Activated CD4-positive, alpha-beta T cell treated with anti-CD3 and anti-CD28 coated beads for 36 hours (primary cell): ENCODE measurements at regions of chr14 and their contacts with region 1.

Region 1: GRCh38 chr14:47917345-47917954 is 242.0 kb upstream of the MDGA2 start:
- DNase-seq: peak; percentile 12
- ATAC-seq: no peak
- H3K4me3 Mint-ChIP-seq: no peak overlapping the region
- H3K27ac Mint-ChIP-seq: no peak overlapping the region
- H3K4me1 Mint-ChIP-seq: peaks cover 3% of the 10 kb centered on the region
- H3K27me3 Mint-ChIP-seq: no peaks in the 10 kb centered on the region

Region 2: GRCh38 chr14:47896749-47897148 is 20.7 kb before region 1 on chr14:
- CTCF ChIA-PET with region 1: no interaction called
- POLR2A ChIA-PET with region 1: no interaction called
- intact Hi-C with region 1: no loop called
- DNase-seq: no peak
- ATAC-seq: no peak
- H3K4me3 Mint-ChIP-seq: no peak overlapping the region
- H3K27ac Mint-ChIP-seq: no peak overlapping the region
- H3K4me1 Mint-ChIP-seq: no peaks in the 10 kb centered on the region
- H3K27me3 Mint-ChIP-seq: no peaks in the 10 kb centered on the region

Region 3: GRCh38 chr14:47966076-47966810 is 48.8 kb after region 1 on chr14:
- CTCF ChIA-PET with region 1: no interaction called
- POLR2A ChIA-PET with region 1: no interaction called
- intact Hi-C with region 1: no loop called
- DNase-seq: no peak
- ATAC-seq: no peak
- H3K4me3 Mint-ChIP-seq: no peak overlapping the region
- H3K27ac Mint-ChIP-seq: no peak overlapping the region
- H3K4me1 Mint-ChIP-seq: no peaks in the 10 kb centered on the region
- H3K27me3 Mint-ChIP-seq: no peaks in the 10 kb centered on the region

Region 4: DNA sequence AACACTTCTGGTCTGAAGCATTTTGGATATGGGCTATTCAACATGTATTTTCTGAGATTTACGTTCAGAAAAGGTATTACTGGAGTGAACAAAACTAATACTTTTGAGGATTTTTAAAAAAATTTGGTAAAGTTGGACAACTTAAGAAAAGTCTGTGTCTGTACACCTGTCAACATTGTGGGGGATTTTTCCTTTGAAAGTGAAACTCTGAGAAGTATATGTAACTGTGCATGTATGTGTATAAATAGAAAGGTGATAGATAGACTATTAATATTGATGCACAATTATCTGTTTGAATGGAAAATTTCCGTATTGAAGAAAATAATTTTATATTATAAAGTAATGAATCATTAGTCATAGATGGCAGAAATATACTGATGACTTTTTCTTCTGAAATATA is 70.7 kb after region 1 on chr14:
- CTCF ChIA-PET with region 1: no interaction called
- POLR2A ChIA-PET with region 1: no interaction called
- intact Hi-C with region 1: no loop called
- DNase-seq: no peak
- ATAC-seq: no peak
- H3K4me3 Mint-ChIP-seq: no peak overlapping the region
- H3K27ac Mint-ChIP-seq: no peak overlapping the region
- H3K4me1 Mint-ChIP-seq: no peaks in the 10 kb centered on the region
- H3K27me3 Mint-ChIP-seq: no peaks in the 10 kb centered on the region

Region 5: DNA sequence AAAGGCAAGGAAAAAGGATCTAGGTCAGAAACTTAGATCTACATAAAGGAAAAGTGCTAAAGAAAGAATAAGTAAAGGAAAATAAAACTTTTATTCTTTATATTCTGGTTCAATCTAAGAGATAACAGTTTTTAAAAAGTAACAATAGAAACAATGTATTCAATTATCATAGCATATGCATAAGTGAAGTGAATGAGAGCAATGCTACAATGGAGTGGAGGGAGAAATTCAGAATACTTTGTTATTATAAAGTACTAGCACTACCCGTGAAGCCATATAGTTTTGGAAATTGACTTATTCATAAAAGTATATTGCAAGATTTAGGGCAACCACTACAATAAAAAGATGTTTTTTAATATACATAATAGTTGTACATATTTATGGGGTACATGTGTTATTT is 344.0 kb after region 1 on chr14:
- CTCF ChIA-PET with region 1: no interaction called
- POLR2A ChIA-PET with region 1: no interaction called
- intact Hi-C with region 1: no loop called
- DNase-seq: no peak
- ATAC-seq: no peak
- H3K4me3 Mint-ChIP-seq: no peak overlapping the region
- H3K27ac Mint-ChIP-seq: no peak overlapping the region
- H3K4me1 Mint-ChIP-seq: no peaks in the 10 kb centered on the region
- H3K27me3 Mint-ChIP-seq: no peaks in the 10 kb centered on the region

Region 6: DNA sequence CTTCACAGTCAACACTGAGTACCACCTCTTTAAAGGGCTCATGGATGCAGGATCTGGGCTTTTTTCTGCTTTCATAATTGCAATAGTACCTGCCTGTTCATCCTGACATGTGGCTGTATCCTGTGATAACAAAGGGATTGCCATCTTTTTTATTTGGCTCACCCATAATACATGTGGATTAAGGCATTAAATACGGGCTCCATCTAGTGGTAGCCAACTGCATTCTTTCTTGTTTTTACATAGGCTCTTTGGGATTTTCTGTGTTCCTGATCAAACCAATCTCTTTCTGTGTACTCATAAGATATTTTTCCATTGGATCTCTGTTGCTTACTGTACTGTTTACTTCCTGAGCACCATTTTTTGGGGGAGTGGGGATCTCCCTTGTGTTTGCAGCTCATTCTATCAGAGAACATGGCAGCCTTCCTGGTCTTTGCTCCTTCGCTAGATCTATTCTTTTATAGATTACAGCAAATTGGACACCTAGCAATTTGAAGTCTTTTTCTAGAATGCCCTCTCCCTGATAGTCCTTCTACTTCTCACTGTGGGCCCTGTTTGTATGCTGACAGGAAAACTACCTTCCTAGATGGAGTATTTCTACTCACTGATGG is 481.3 kb after region 1 on chr14:
- CTCF ChIA-PET with region 1: no interaction called
- POLR2A ChIA-PET with region 1: no interaction called
- intact Hi-C with region 1: loop called in 1 of 2 experiments (anchors 5 kb)
- DNase-seq: no peak
- ATAC-seq: no peak
- H3K4me3 Mint-ChIP-seq: no peak overlapping the region
- H3K27ac Mint-ChIP-seq: no peak overlapping the region
- H3K4me1 Mint-ChIP-seq: no peaks in the 10 kb centered on the region
- H3K27me3 Mint-ChIP-seq: no peaks in the 10 kb centered on the region

Region 7: GRCh38 chr14:49173765-49174373 is 1256.4 kb after region 1 on chr14:
- CTCF ChIA-PET with region 1: interaction called, 3 read pairs
- POLR2A ChIA-PET with region 1: no interaction called
- intact Hi-C with region 1: loop called in 1 of 2 experiments (anchors 5 kb)
- DNase-seq: peak; percentile 71
- ATAC-seq: peak; percentile 51
- H3K4me3 Mint-ChIP-seq: no peak overlapping the region
- H3K27ac Mint-ChIP-seq: no peak overlapping the region
- H3K4me1 Mint-ChIP-seq: no peaks in the 10 kb centered on the region
- H3K27me3 Mint-ChIP-seq: peaks cover 6% of the 10 kb centered on the region